ENCODE measurements at regions of chr5 and their contacts with region 1.

Region 1: GRCh38 chr5:1503241-1504068 is 20.3 kb downstream of the LPCAT1 start:
- DNase-seq: no peak
- CTCF ChIP-seq: no peak

Region 2: GRCh38 chr5:1488943-1489680 is 14.3 kb before region 1 on chr5:
- CTCF ChIA-PET with region 1: interaction called, 16 read pairs
- POLR2A ChIA-PET with region 1: interaction called, 29 read pairs
- DNase-seq: peak; percentile 79
- CTCF ChIP-seq: no peak

Region 3: GRCh38 chr5:1523771-1524480 is 20.5 kb after region 1 on chr5 and contains the start of gene LPCAT1:
- CTCF ChIA-PET with region 1: interaction called, 12 read pairs
- POLR2A ChIA-PET with region 1: interaction called, 5 read pairs
- DNase-seq: peak; percentile 93
- CTCF ChIP-seq: no peak

Region 4: DNA sequence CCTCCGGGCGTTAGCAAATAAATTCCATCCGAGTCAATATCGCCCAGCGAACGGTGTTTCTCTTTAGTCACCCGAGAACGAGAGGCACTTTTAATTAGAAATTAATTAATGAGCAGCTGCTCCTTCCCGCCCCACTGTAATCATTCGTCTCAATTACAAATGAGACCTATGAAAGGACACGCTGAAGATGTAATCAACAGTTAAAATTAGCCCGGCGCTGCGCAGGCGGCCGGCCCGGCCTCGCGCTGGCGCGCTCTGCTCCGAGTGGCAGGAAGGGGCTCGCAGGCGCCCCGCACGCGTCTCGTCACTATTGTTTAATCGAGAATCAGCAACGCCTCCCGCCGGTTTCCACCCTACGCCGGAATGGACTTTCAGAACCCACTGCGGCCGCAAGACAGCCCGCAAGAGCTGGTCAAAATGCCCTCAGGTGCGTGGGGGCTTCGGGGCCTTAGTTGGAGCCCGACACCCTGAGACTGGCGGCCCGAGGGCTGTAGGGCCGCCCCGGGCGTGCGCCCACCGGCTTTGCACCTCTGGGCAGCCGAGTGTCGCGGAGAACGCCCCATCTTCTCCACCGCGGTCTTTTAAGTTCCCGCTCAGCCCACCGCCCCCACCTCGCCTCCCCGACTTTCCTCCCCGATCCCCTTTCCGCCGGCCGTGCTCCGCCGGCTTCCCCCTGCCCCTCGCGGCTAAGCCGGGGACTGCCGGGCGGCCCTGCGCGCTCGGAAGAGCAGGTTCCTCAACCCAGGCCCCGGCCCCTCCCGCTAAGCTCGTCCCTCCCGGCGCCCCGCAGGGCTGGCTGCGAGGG is 379.9 kb after region 1 on chr5:
- CTCF ChIA-PET with region 1: no interaction called
- POLR2A ChIA-PET with region 1: no interaction called
- DNase-seq: no peak
- CTCF ChIP-seq: no peak

Measured in GM10248 (cell line).